Posterior vena cava (tissue), 2 donors: ENCODE measurements at regions of chr6 and their contacts with region 1.

Region 1: GRCh38 chr6:159693128-159693893 is at the start of gene SOD2:
- DNase-seq: peak; percentile 95
- total RNA-seq, gene SOD2: 584 to 998 TPM

Region 2: DNA sequence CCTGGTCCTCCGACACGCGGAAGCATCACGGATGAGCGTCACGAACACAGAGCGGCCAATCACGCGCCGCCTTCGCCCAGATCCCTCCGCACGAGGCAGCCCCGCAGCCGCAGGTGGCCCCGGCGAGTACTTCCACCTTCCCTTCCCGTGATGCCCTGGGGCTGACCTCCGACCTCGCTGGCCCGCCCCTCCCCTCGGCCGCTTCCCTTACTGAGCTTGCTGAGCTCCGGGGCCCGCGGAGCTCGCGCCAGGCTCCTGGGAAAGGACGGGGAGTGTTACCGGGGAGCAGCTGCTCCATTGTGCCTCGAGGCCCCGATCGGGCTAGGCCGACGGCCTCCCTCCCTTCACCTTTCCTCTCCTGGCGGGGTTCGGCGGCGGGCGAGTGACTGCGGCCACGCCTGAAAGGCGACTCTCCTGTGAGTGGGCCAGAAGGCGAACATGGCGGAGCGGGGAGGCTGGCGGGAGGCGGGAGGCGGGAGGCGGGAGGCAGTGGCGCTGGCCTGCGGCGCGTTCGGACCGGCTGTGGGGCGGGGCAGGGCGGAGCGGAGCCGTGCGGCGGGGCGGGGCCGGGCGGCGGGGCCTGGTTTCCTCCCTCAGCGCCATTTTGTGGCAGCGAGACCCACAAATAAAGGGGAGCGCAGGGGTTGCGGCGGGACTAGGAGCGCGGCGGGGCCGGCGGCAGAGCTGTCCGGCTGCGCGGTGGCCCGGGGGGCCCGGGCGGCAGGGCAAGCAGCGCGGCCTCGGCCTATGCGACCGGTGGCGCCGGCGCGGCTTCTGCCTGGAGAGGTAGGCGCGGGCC is 33.8 kb after region 1 on chr6 and contains the start of gene WTAP:
- intact Hi-C with region 1: loop called (anchors 5 kb)
- DNase-seq: peak; percentile 98
- total RNA-seq, gene WTAP: 70.1 to 84.7 TPM

Region 3: DNA sequence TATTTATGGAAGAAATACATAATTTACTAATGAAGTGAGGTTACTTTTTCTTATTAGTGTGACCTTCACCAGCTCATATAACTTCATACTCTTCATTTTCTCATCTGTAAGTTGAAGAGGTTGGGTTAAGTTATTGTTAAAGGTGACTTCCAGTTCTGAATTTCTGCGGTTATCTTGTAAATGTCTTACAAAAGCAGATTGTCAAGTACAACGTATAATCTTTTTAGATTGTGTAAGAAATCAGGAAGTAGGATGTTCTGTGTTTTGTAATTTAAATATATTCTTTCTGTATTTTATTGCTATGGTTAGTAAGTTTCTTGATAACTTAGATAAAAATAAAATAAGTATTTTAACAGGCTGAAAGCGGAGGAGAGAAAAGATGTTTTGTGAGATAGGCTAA is 46.0 kb after region 1 on chr6:
- intact Hi-C with region 1: no loop called
- DNase-seq: no peak

Region 4: DNA sequence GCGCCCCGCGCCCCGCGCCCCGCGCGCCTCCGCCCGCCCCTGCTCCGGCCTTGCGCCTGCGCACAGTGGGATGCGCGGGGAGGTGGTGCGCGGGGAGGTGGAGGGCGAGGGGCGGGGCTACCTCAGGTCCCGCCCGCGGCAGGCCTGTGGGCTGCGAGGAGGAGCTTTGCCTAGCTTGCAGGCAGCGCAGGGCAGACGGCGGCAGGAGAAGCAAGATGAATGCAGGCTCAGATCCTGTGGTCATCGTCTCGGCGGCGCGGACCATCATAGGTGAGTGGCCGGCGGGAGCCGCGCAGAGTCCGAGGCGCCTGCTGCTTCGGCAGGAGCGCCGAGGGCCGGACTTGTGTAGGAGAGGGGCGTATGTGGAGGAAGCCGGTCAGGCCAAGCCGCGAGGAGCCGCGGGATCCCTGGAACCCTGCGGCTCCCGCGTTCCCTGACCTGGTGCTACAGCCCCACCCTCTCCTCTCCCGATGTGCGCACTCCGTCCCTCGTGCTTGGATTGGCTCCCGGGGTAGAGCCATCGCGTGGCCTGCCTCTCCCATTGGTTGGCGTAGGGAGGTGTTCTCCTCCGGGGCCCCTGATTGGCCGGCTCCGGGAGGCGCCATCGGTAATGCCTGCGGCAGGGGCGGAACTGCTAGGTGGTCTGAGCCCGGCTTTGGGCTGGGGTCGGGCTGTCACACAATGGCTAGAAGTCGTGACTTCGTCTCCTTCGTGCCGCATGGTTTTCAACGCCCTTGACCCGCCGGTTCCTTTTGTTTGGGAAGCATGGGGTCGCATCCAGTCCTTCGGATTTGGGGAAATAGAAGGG is 68.8 kb after region 1 on chr6 and contains the start of gene ACAT2:
- intact Hi-C with region 1: loop called (anchors 2 to 5 kb)
- DNase-seq: peak; percentile 98
- total RNA-seq, gene ACAT2: 11.0 to 13.6 TPM

Region 5: GRCh38 chr6:159789377-159790148 is 96.3 kb after region 1 on chr6 and contains the start of gene TCP1:
- intact Hi-C with region 1: loop called in 1 of 2 experiments (anchors 10 kb)
- DNase-seq: peak; percentile 100
- total RNA-seq, gene TCP1: 116 to 137 TPM